SK-N-SH (cell line): ENCODE measurements at regions of chr17 and their contacts with region 1.

Region 1: GRCh38 chr17:79892459-79892858 is 53.2 kb upstream of the CBX4 start:
- DNase-seq: no peak
- H3K4me3 ChIP-seq: no peak overlapping the region
- H3K27ac ChIP-seq: no peak overlapping the region
- H3K4me1 ChIP-seq: peaks cover 0 to 21% of the 10 kb centered on the region in 2 experiments; a peak in 1 of 4 replicates
- H3K27me3 ChIP-seq: peaks cover 22% of the 10 kb centered on the region; the same call in 1 of the 2 replicates
- CTCF ChIP-seq: no peak
- EP300 ChIP-seq: no peak
- RAD21 ChIP-seq: no peak

Region 2: DNA sequence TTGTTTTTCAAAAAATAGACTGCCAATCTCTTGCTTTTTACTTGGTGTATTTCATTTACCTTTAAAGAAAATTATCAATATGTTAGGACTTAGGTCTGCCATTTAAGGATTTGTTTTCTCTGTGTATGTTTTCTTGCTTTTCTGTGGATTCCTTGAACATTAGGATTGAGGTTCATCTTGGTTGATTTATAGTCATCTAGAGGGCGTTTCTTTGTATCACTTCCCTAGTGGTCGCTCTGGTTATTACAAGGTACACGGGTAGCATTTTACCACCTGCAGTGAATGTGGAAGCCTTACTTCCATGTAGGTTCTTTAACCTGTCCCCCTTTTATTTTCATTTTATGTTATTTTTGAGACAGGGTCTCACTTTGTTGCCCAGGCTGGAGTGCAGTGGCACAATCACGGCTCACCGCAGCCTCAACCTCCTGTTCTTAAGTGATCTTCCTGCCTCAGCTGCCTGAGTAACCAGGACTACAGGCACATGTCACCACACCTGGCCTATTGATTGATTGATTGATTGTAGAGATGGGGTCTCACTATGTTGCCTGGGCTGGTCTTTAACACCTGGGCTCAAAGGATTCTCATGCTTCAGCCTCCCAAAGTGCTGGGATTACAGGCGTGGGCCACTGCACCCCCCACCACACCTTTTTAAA is 18.0 kb before region 1 on chr17:
- CTCF ChIA-PET with region 1: interaction called, 79 read pairs
- POLR2A ChIA-PET with region 1: no interaction called
- DNase-seq: peak; percentile 80
- H3K4me3 ChIP-seq: no peak overlapping the region
- H3K27ac ChIP-seq: no peak overlapping the region
- H3K4me1 ChIP-seq: no peaks in the 10 kb centered on the region
- H3K27me3 ChIP-seq: no peaks in the 10 kb centered on the region; the same call in 1 of the 2 replicates
- CTCF ChIP-seq: peak; percentile 69
- EP300 ChIP-seq: no peak
- RAD21 ChIP-seq: peak; percentile 43

Region 3: DNA sequence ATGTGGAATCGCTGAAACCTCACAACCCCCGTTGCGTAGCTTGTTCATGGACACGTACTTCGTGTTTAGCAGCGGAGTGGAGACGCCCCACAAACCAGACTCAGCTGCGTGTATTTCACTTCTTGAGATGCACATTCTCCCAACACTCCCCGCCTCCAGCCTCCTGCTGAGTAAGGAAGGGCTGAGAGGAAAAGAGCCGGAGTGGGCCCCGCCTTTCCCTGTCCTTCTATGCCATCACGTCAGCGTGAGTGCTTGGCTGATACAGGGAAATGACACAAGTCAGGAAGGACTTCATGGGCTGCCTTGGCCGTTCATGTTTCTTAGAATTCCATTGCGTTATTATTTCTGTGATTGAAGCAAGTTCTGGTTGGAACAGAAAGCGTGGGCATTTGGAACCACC is 15.4 kb after region 1 on chr17:
- CTCF ChIA-PET with region 1: interaction called, 13 read pairs
- POLR2A ChIA-PET with region 1: no interaction called
- DNase-seq: no peak
- H3K4me3 ChIP-seq: no peak overlapping the region
- H3K27ac ChIP-seq: no peak overlapping the region
- H3K4me1 ChIP-seq: no peaks in the 10 kb centered on the region
- H3K27me3 ChIP-seq: peaks cover 16% of the 10 kb centered on the region; the same call in 1 of the 2 replicates
- CTCF ChIP-seq: no peak
- EP300 ChIP-seq: no peak
- RAD21 ChIP-seq: no peak